Dorsolateral prefrontal cortex (tissue), 120 donors: ENCODE measurements at regions of chr1 and their contacts with region 1.

Region 1: DNA sequence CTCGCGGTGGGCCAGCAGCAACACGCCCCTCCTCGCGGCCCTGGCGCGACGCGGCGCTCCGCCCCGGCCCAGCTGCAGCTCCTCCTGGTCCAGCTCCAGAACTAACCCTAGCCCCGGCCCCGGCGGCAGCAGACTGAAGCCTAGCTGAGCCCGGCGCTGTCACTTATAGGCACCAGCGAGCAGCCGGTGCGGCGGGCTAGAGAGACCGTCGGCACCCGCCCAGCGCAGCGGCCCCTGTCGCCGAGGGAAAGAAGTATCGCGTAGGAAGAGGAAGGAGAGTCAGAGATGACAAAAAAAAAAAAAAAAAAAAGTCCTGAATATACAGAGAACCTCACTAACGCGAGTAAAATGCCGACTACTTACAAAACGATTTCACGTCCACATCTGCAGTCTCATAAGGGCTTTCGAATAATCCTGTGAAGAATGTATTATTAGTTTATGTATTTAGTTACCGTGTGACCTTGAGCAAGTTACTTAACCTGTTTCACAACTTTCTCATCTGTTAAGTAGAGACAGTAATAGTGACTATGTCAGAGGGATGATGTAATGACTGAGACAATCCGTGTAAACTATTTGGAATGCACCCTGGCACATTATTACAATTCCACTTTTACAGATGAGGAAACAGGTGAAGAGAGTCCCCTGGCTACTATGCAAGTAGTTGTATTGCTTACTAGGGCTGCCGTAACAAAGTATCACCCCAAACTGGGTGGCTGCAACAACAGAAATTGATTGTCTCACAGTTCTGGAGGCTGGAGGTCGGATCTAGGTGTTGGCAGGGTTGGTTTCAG is at the start of gene SLC9A1:
- DNase-seq: peak; percentile 92 to 97 (median 96)
- H3K4me3 ChIP-seq: peak within 1 kb of the TSS; percentile 52 to 91 (median 79)
- H3K27ac ChIP-seq: peak within 1 kb of the TSS; percentile 58 to 97 (median 87)
- H3K27me3 ChIP-seq: no peaks in the 10 kb centered on the region
- CTCF ChIP-seq: peak; percentile 39 to 94 (median 86)
- total RNA-seq, gene SLC9A1: 16.2 to 58.9 (median 38.4) TPM

Region 2: DNA sequence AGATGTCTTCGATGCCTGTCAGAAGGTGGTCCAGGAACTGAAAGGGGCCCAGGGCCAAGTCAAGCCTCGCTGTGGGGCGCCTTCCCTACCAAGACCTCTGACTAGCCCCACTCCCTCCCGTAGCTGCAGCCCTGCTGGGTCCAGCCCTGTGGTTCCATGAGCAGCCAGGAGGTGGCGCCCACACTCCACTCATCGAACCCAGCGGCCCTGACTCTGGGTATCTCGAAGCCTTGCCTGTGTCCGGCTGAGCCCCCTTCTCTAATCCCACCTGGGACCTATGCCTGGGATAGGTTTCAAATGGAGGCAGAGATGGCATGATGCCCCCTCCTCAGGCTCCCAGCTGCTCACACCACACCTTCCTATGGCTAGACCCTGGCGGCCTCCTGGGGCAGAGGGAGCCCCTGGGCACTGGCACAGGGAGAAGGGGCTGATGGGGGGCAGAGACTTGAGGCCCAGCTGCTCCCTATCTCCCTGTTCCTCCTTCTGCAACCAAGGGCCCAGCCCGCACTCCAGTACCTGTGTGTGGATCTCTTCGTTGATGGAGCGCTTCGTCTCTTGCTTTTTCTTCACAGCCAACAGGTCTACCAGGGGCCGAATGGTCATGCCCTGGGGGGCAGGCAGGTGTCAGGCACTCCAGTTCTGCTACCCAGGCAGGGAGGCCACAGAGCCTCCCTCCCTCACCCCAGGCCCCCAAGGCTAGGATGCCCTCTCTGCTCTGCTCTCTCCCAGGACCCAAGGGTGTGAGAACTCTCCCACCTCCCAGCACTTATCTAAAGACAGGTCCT is 52.3 kb before region 1 on chr1:
- intact Hi-C with region 1: loop called in 1 of 2 experiments (anchors 2 kb)
- DNase-seq: peak; percentile 75 to 92 (median 87)
- H3K4me3 ChIP-seq: peak overlapping the region in 3 of 59 donors; percentile 0 to 44 (median 3)
- H3K27ac ChIP-seq: peak overlapping the region in 25 of 59 donors; percentile 7 to 67 (median 49)
- H3K27me3 ChIP-seq: no peaks in the 10 kb centered on the region
- CTCF ChIP-seq: peak in 55 of 56 donors; percentile 77 to 100 (median 98)

Region 3: GRCh38 chr1:27111626-27112573 is 43.3 kb before region 1 on chr1:
- intact Hi-C with region 1: loop called in 1 of 2 experiments (anchors 5 kb)
- DNase-seq: peak in 9 of 10 donors; percentile 39 to 85 (median 70)
- H3K4me3 ChIP-seq: no peak overlapping the region
- H3K27ac ChIP-seq: peak overlapping the region in 48 of 59 donors; percentile 4 to 90 (median 48)
- H3K27me3 ChIP-seq: no peaks in the 10 kb centered on the region
- CTCF ChIP-seq: peak in 14 of 56 donors; percentile 6 to 39 (median 20)

Region 4: GRCh38 chr1:27234049-27234882 is 79.1 kb after region 1 on chr1 and contains the start of gene WDTC1:
- intact Hi-C with region 1: loop called (anchors 5 kb)
- DNase-seq: peak; percentile 96 to 100 (median 99)
- H3K4me3 ChIP-seq: peak within 1 kb of the TSS; percentile 60 to 98 (median 87)
- H3K27ac ChIP-seq: peak within 1 kb of the TSS in 57 of 59 donors; percentile 26 to 94 (median 84)
- H3K27me3 ChIP-seq: no peaks in the 10 kb centered on the region
- CTCF ChIP-seq: peak in 30 of 56 donors; percentile 6 to 60 (median 34)
- total RNA-seq, gene WDTC1: 51.9 to 79.7 (median 62.5) TPM